Psoas muscle (tissue), 8 donors: ENCODE measurements at regions of chr11 and their contacts with region 1.

Region 1: GRCh38 chr11:56027354-56027753 is at the start of gene OR5AS1:
- DNase-seq: no peak
- ATAC-seq: no peak
- H3K4me3 ChIP-seq: no peak within 1 kb of the TSS
- H3K27ac ChIP-seq: no peak within 1 kb of the TSS
- H3K4me1 ChIP-seq: no peaks in the 10 kb centered on the region
- H3K27me3 ChIP-seq: no peaks in the 10 kb centered on the region
- CTCF ChIP-seq: no peak
- total RNA-seq, gene OR5AS1: not detected

Region 2: GRCh38 chr11:55902303-55902702 is 125.1 kb before region 1 on chr11:
- intact Hi-C with region 1: no loop called
- DNase-seq: no peak
- ATAC-seq: no peak
- H3K4me3 ChIP-seq: no peak overlapping the region
- H3K27ac ChIP-seq: no peak overlapping the region
- H3K4me1 ChIP-seq: no peaks in the 10 kb centered on the region
- H3K27me3 ChIP-seq: no peaks in the 10 kb centered on the region
- CTCF ChIP-seq: no peak

Region 3: DNA sequence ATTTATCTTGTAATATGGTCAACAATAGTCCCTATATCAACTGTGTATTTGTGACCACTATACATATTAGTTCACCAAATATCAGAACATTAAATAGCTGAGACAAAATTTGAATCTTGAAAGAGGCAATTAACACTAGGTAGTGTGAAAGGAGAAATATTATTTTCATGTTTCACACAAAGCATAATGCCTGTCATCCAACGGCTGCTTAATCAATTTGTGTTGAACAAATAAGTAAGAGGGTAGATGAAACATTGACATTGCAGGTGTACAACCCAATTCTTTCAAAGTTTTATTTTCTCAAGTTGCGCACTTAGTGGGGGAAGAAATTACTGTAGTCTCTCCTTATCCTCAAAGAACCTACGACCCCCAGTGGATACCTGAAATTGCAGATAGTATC is 62.3 kb after region 1 on chr11:
- intact Hi-C with region 1: loop called in 1 of 2 experiments (anchors 10 kb)
- DNase-seq: no peak
- ATAC-seq: no peak
- H3K4me3 ChIP-seq: no peak overlapping the region
- H3K27ac ChIP-seq: no peak overlapping the region
- H3K4me1 ChIP-seq: no peaks in the 10 kb centered on the region
- H3K27me3 ChIP-seq: no peaks in the 10 kb centered on the region
- CTCF ChIP-seq: no peak